ENCODE measurements at regions of chr12 and their contacts with region 1.

Region 1: GRCh38 chr12:108950991-108951739 is 69.7 kb downstream of the SVOP start:
- DNase-seq: peak; percentile 83

Region 2: GRCh38 chr12:108562348-108563135 is 388.6 kb before region 1 on chr12 and contains the start of gene ISCU:
- intact Hi-C with region 1: loop called (anchors 5 kb)
- DNase-seq: peak; percentile 99
- total RNA-seq, gene ISCU: 432 TPM

Region 3: DNA sequence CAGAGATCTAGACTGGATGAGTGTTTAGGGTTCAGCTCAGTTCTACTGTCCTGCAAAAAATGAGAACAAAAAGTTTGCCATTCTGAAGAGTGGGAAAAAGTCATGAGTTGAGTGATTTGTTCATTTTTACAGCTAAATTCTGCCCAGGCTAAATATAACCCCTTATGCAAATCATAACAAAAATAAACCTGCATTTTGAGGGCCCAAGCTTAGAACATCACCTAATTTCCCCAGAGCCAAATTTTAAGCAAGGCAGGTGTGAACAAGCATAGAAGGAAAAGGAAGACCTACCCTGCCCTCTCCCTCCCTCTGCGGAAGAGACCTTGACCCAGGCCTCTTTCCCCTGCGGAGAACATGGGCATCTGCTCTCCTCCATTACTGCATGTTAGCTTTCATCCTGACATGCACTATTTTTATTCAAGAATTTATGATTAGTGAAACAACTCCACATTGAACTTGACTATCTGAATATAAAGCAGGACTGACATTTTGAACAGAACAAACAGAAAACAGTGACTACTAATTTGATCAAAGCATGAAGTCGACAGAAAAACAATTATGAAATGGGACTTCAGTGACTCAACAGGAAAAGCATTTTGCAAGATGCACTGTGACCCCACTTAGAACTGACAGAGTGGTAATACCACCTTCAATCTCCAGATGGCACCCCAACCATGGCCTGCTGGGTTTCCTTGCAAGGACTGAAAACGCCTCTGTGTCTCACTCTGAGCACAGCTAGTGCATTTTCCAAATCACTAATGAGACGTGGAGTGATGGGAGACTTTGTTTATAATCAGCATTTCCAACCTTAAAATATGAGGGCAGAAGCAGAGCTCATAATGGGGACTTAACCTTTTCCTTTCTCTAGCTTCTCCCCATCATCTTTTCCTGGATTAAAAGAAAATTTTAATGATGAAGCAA is 286.6 kb before region 1 on chr12:
- intact Hi-C with region 1: loop called (anchors 5 kb)
- DNase-seq: peak; percentile 92

Region 4: DNA sequence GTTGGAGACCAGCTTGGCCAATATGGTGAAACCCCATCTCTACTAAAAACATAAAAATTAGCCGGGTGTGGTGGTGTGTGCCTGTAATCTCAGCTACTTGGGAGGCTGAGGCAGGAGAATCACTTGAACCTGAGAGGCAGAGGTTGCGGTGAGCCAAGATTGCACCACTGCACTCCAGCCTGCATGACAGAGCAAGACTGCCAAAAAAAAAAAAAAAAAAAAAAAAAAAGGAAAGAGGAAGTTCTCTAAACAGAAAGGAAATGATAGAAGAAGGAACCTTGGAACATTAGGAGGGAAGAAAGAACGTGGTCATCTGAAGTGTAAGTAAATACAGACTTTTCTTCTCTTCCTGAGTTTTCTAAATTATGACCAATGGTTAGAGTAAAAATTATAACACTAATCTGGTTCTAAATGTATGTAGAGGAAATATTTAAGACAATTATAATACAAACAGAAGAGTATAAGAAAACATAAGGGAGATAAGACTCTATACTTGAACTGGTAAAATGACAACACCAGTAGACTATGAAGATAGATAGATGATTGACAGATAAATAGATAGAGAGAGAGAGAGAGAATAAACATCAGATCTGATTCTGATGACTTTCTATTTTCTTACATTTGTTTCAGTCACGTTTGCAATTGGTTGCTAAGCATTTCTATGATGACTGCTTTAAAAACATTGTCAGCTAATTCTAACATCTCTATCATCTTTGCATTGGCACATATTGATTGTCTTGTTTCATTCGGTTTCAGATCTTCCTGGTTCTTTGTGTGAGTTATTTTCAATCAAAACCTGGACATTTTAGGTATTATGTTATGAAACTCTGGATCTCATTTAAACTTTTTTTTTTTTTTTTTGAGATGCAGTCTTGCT is 206.9 kb before region 1 on chr12:
- intact Hi-C with region 1: loop called (anchors 10 kb)
- DNase-seq: peak; percentile 82

Region 5: DNA sequence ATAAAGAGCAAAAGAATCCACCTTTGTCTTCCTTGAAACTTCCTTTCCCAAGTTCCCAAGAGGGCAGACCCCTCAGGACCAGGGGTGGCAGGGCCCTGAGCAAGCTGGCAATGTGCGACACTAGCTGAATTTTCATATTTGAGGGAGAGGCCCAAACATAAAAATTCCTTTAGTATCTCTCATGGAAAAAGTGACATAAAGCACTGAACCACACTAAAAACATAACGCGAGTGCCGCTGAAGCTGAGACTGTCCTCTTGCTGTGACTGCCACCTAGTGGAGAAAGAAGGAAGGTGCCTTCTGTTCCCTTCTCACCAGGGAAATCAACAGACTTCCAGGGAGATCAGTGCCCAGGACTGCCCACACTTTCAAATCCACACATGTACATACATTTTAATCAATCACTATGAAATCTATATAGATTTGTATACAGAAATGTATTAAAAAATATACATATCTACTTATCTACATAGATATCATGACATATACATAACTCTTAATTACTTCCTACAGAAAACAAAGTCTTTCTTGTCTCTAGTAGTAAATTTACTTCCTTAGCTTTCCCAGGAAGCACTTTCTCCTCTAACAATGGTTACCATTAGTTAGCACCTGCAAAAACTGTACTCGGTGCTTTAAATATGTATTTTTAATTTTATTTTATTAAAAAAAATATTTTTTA is 147.6 kb before region 1 on chr12:
- intact Hi-C with region 1: loop called (anchors 5 kb)
- DNase-seq: no peak

Region 6: DNA sequence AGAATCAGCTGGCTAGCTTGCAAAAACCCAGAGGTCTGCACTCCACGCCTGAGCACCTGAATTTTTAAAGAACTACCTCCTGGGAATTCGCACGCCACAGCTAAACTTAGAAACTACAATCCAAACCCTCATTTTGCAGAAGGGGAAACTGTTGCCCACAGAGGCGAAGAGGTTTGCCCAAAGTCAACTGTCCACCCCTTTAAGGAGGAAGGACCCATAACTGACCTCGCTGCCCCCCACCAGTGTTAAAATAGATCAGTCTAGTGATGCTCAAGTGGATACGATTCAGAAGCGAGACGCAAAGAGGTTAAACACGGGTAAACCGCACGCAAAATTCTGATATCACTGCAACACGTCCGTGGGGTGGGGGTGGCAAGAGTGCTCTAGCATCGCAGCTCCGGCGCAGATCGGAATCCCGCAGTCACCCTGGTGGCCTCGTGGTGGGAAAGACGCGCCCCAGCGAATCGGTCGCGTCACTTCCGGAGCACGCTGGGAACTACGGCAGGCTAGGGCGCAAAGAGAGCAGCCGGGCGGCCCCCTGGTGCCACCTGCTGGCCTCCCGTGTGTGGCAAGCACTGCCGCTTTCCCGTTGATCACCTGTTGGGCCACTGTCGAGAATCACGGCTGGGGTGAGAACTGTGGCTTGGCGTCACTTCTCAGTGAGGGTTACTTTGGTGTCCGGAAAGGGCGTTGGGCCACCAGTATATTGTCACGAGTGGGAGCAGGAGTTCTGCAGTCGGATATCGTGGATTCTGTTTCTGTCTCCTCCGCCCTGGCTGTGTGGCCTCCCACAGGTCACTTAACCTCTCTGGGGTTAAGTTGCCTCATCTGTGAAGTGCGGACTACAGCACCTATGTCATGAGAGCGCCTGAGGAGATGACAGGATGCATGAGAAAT is 142.1 kb after region 1 on chr12 and contains the start of gene ALKBH2:
- intact Hi-C with region 1: loop called (anchors 5 kb)
- DNase-seq: peak; percentile 97
- total RNA-seq, gene ALKBH2: 9.7 TPM

Measured in cardiac septum (tissue), 1 donor.